Heart left ventricle (tissue), 16 donors: ENCODE measurements at regions of chr4 and their contacts with region 1.

Region 1: GRCh38 chr4:45324455-45325417 is 598.4 kb upstream of the GNPDA2 start:
- DNase-seq: peak in 3 of 5 donors; percentile 17 to 57 (median 43)
- ATAC-seq: peak; percentile 65 to 98 (median 76)
- H3K4me3 ChIP-seq: no peak overlapping the region
- H3K27ac ChIP-seq: peak overlapping the region in 5 of 12 donors; percentile 9 to 61 (median 20)
- H3K4me1 ChIP-seq: no peaks in the 10 kb centered on the region
- H3K27me3 ChIP-seq: no peaks in the 10 kb centered on the region
- CTCF ChIP-seq: no peak
- POLR2A ChIP-seq: no peak

Region 2: GRCh38 chr4:44916411-44916810 is 408.3 kb before region 1 on chr4:
- intact Hi-C with region 1: loop called in 1 of 10 experiments (anchors 5 kb)
- DNase-seq: no peak
- ATAC-seq: peak in 1 of 4 donors; percentile 47
- H3K4me3 ChIP-seq: peak overlapping the region in 8 of 12 donors; percentile 10 to 45 (median 28)
- H3K27ac ChIP-seq: no peak overlapping the region
- H3K4me1 ChIP-seq: peaks cover 0 to 6% (median 0%) of the 10 kb centered on the region in 12 donors
- H3K27me3 ChIP-seq: no peaks in the 10 kb centered on the region
- CTCF ChIP-seq: no peak
- POLR2A ChIP-seq: no peak

Region 3: DNA sequence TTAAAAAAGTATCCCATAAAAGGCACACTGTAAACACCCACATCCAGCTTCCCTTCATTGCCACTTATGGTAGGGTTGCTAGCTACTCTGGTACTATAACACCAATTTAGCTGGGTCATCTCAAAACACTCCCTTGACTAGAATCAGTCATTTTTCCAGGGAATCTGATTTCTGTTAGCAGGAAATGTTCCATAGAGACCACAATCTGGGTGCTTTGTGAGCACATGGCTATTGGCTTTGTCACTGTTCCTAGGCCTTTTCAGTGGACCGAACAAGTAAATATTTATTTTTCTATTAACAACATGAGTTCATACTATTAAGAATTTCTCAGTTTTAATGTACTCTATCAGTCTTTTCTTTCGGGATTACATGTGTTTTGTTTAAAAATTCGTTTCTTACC is 193.7 kb before region 1 on chr4:
- intact Hi-C with region 1: loop called in 2 of 10 experiments (anchors 10 kb)
- DNase-seq: no peak
- ATAC-seq: no peak
- H3K4me3 ChIP-seq: no peak overlapping the region
- H3K27ac ChIP-seq: no peak overlapping the region
- H3K4me1 ChIP-seq: peaks cover 0 to 3% (median 0%) of the 10 kb centered on the region in 12 donors
- H3K27me3 ChIP-seq: no peaks in the 10 kb centered on the region
- CTCF ChIP-seq: no peak
- POLR2A ChIP-seq: no peak

Region 4: GRCh38 chr4:45215976-45216542 is 108.7 kb before region 1 on chr4:
- intact Hi-C with region 1: no loop called
- DNase-seq: no peak
- ATAC-seq: no peak
- H3K4me3 ChIP-seq: no peak overlapping the region
- H3K27ac ChIP-seq: no peak overlapping the region
- H3K4me1 ChIP-seq: no peaks in the 10 kb centered on the region
- H3K27me3 ChIP-seq: no peaks in the 10 kb centered on the region
- CTCF ChIP-seq: no peak
- POLR2A ChIP-seq: no peak

Region 5: GRCh38 chr4:45345558-45345957 is 20.8 kb after region 1 on chr4:
- intact Hi-C with region 1: no loop called
- DNase-seq: no peak
- ATAC-seq: no peak
- H3K4me3 ChIP-seq: no peak overlapping the region
- H3K27ac ChIP-seq: no peak overlapping the region
- H3K4me1 ChIP-seq: peaks cover 0 to 3% (median 0%) of the 10 kb centered on the region in 12 donors
- H3K27me3 ChIP-seq: no peaks in the 10 kb centered on the region
- CTCF ChIP-seq: no peak
- POLR2A ChIP-seq: no peak